ENCODE measurements at regions of chr7 and their contacts with region 1.

Region 1: DNA sequence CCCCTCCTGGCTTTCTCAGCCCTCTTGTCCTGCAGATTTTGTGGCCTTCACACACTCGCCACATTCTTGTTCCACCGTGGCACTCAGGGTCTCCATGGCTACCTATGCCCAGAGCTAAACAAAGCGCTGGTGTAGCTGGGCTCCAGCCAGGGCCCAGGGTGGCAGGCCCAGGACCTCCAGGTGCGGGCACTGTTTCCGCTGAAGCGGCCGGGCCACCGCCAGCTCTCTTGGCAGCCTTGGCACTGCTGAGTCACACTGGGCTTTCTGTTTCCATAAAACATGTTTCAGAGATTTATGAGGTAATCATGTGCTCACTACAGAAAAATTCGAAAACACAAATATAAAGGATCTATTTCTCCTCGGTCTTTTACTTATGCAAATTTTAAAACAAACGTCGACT is 51.3 kb downstream of the AOC1 start:
- DNase-seq: peak; percentile 57
- H3K4me3 ChIP-seq: no peak overlapping the region
- H3K27ac ChIP-seq: no peak overlapping the region
- H3K4me1 ChIP-seq: peaks cover 17% of the 10 kb centered on the region
- H3K27me3 ChIP-seq: no peaks in the 10 kb centered on the region
- CTCF ChIP-seq: no peak
- POLR2A ChIP-seq: no peak

Region 2: DNA sequence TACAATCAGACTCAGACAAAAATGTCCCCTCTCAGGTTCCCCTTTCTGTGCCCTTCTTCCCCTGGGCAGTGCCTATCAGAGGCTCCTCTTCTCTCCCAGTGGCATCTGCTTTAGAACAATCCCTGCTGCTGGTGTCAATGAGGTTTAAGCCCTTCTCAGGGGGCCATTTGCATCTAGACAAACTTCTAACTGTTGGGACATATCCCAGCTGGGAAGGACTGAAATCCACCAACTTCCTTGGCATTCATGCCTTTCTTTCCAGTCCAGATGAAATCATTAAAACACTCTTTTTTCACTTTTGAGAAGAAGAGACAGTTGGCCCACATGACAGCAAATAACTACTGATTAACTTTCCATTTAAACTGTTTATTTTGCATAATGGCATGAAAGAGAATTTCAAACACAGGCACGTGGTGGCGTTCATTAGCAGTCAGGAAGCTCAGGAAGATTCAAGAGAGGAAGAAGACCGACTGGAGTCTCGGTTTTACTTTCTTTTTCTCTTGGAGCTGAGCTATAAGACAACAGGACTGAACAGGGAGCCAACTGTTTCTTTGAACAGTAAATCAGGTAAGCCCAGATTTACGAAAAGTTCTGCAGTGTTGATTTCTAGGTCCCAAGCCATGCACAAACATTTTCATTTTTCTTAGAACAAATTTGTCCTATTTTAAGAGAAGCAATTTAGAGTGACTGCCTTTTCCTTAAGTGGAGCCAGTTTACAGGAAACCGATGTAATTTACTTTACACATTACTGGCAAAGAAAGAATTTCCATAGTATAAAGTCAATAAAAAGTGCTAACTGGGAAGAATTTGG is 218.2 kb before region 1 on chr7 and contains the start of gene GIMAP2:
- intact Hi-C with region 1: no loop called
- DNase-seq: no peak
- H3K4me3 ChIP-seq: peak within 1 kb of the TSS; percentile 7 to 37
- H3K27ac ChIP-seq: peak within 1 kb of the TSS; percentile 10 to 13
- H3K4me1 ChIP-seq: no peaks in the 10 kb centered on the region
- H3K27me3 ChIP-seq: no peaks in the 10 kb centered on the region
- CTCF ChIP-seq: no peak
- POLR2A ChIP-seq: no peak
- total RNA-seq, gene GIMAP2: 1.9 to 2.4 TPM

Region 3: GRCh38 chr7:150988230-150989226 is 84.9 kb after region 1 on chr7:
- intact Hi-C with region 1: loop called (anchors 5 kb)
- DNase-seq: peak; percentile 76
- H3K4me3 ChIP-seq: peak overlapping the region in 1 of 2 donors; percentile 12
- H3K27ac ChIP-seq: no peak overlapping the region
- H3K4me1 ChIP-seq: peaks cover 17% of the 10 kb centered on the region
- H3K27me3 ChIP-seq: no peaks in the 10 kb centered on the region
- CTCF ChIP-seq: peak; percentile 80 to 91 (median 81)
- POLR2A ChIP-seq: no peak

Measured in testis (tissue), 5 donors.